PC-3 (cell line): ENCODE measurements at regions of chr9 and their contacts with region 1.

Region 1: GRCh38 chr9:77648234-77649120 is at the start of gene GNA14:
- DNase-seq: peak; percentile 52
- ATAC-seq: peak; percentile 72
- H3K4me3 ChIP-seq: peak within 1 kb of the TSS; percentile 71
- H3K27ac ChIP-seq: peak within 1 kb of the TSS; percentile 54
- H3K4me1 ChIP-seq: peaks cover 6% of the 10 kb centered on the region
- H3K27me3 ChIP-seq: no peaks in the 10 kb centered on the region
- CTCF ChIP-seq: 0 out of 2 replicates have a peak, but pooled peaks have one; percentile 34
- total RNA-seq, gene GNA14: 1.2 and 2.5 TPM in 2 replicates

Region 2: DNA sequence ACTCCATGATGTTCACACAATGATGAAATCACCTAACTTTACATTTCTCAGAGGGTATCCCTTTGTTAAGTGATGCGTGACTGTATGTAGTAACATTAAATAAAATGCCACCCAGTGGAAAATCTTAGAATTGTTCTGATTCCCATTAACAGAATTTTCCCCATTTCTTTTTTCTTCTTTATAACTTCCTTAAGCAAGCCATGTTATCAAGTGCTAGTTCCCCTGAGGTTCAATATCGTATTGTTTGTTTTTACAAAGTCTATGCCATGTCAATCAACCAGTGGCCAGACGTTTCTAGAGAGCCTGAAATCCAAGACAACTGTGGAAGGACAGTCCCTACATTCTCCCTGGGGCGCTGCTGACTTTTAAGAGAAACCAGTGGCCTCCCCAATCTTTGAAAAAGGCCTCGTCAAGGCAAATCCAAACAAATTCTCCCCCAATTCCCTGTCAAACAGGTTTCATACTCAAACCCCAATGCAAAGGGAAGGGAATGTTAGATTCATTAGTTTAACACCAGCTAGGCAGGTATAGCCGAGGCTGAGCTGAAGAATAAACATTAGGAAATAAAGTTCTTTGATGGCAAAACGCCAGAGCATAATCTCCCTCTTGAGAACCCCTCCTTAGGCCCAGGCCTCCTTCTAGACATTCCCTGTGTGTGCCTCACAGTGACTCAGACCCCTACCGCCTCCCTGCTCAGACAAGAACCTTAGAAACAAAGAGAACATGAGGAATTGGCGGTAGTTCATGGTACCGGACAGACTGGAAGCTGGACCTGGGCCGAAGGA is 199.0 kb before region 1 on chr9:
- CTCF ChIA-PET with region 1: interaction called, 11 read pairs
- POLR2A ChIA-PET with region 1: no interaction called
- intact Hi-C with region 1: no loop called
- DNase-seq: peak; percentile 11
- ATAC-seq: no peak
- H3K4me3 ChIP-seq: no peak overlapping the region
- H3K27ac ChIP-seq: no peak overlapping the region
- H3K4me1 ChIP-seq: no peaks in the 10 kb centered on the region
- H3K27me3 ChIP-seq: no peaks in the 10 kb centered on the region
- CTCF ChIP-seq: peak; percentile 33; the same call in 1 of the 2 replicates

Region 3: GRCh38 chr9:77495834-77496671 is 152.4 kb before region 1 on chr9:
- CTCF ChIA-PET with region 1: no interaction called
- POLR2A ChIA-PET with region 1: interaction called, 3 read pairs
- intact Hi-C with region 1: loop called (anchors 1 kb)
- DNase-seq: peak; percentile 79
- ATAC-seq: peak; percentile 90
- H3K4me3 ChIP-seq: peak overlapping the region; percentile 9; the same call in 1 of the 2 replicates
- H3K27ac ChIP-seq: peak overlapping the region; percentile 94
- H3K4me1 ChIP-seq: peaks cover 27% of the 10 kb centered on the region
- H3K27me3 ChIP-seq: no peaks in the 10 kb centered on the region
- CTCF ChIP-seq: no peak

Region 4: DNA sequence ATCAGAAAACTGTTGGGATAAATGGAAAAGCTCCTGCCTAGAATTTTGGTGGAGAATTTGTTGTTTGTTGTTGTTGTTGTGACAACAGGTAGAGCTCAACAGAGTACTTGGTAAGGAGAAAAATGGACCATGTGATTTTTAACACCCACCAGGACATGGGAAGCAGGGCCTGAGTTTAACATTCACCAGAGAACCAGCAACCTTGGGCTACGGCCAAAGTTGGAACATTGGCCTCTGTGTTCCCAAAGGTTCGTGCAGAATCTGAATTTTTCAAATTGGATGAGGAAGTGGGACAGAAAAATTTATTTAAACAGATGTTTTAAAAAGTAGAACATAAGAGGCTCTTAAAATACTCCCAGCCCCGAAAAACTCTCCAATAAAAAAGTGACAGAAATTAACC is 127.4 kb before region 1 on chr9:
- CTCF ChIA-PET with region 1: interaction called, 4 read pairs
- POLR2A ChIA-PET with region 1: no interaction called
- intact Hi-C with region 1: loop called (anchors 2 kb)
- DNase-seq: no peak
- ATAC-seq: no peak
- H3K4me3 ChIP-seq: no peak overlapping the region
- H3K27ac ChIP-seq: no peak overlapping the region
- H3K4me1 ChIP-seq: peaks cover 23% of the 10 kb centered on the region
- H3K27me3 ChIP-seq: no peaks in the 10 kb centered on the region
- CTCF ChIP-seq: no peak

Region 5: DNA sequence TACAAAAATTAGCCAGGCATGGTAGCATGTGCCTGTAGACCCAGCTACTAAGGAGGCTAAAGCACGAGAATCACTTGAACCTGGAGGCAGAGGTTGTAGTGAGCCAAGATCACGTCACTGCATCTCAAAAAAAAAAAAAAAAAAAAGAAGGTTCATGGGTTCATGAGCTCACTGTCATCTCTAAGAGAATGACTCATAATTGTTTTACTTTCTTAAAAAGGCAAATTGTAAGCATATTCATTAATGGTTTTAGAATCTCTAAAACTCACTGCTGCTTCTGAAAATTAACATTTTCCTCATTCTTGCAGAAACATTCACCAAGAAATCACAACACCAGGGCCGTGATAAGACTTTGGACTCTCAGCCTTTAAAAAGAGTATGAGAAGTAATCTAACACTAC is 103.9 kb before region 1 on chr9:
- CTCF ChIA-PET with region 1: no interaction called
- POLR2A ChIA-PET with region 1: no interaction called
- intact Hi-C with region 1: no loop called
- DNase-seq: no peak
- ATAC-seq: no peak
- H3K4me3 ChIP-seq: no peak overlapping the region
- H3K27ac ChIP-seq: no peak overlapping the region
- H3K4me1 ChIP-seq: no peaks in the 10 kb centered on the region
- H3K27me3 ChIP-seq: no peaks in the 10 kb centered on the region
- CTCF ChIP-seq: no peak

Region 6: GRCh38 chr9:77679088-77679487 is 30.6 kb after region 1 on chr9:
- CTCF ChIA-PET with region 1: no interaction called
- POLR2A ChIA-PET with region 1: no interaction called
- intact Hi-C with region 1: no loop called
- DNase-seq: peak; percentile 6
- ATAC-seq: no peak
- H3K4me3 ChIP-seq: no peak overlapping the region
- H3K27ac ChIP-seq: no peak overlapping the region
- H3K4me1 ChIP-seq: no peaks in the 10 kb centered on the region
- H3K27me3 ChIP-seq: no peaks in the 10 kb centered on the region
- CTCF ChIP-seq: no peak

Region 7: GRCh38 chr9:77751341-77752091 is 103.0 kb after region 1 on chr9:
- CTCF ChIA-PET with region 1: no interaction called
- POLR2A ChIA-PET with region 1: no interaction called
- intact Hi-C with region 1: loop called (anchors 1 kb)
- DNase-seq: peak; percentile 75
- ATAC-seq: peak; percentile 82
- H3K4me3 ChIP-seq: no peak overlapping the region
- H3K27ac ChIP-seq: no peak overlapping the region
- H3K4me1 ChIP-seq: peaks cover 7% of the 10 kb centered on the region
- H3K27me3 ChIP-seq: no peaks in the 10 kb centered on the region
- CTCF ChIP-seq: peak; percentile 76